Activated CD4-positive, alpha-beta T cell treated with anti-CD3 and anti-CD28 coated beads, Interleukin-2, amount 10 ng/mL, durations not matched to agents 24 days and 14 days (primary cell): ENCODE measurements at regions of chr7 and their contacts with region 1.

Region 1: GRCh38 chr7:142853739-142854371 is 1.0 kb upstream of the EPHB6 start:
- DNase-seq: peak; percentile 90
- H3K4me3 Mint-ChIP-seq: peak overlapping the region; percentile 94
- H3K27ac Mint-ChIP-seq: peak overlapping the region; percentile 82
- H3K4me1 Mint-ChIP-seq: peaks cover 14% of the 10 kb centered on the region
- H3K27me3 Mint-ChIP-seq: peaks cover 17% of the 10 kb centered on the region

Region 2: DNA sequence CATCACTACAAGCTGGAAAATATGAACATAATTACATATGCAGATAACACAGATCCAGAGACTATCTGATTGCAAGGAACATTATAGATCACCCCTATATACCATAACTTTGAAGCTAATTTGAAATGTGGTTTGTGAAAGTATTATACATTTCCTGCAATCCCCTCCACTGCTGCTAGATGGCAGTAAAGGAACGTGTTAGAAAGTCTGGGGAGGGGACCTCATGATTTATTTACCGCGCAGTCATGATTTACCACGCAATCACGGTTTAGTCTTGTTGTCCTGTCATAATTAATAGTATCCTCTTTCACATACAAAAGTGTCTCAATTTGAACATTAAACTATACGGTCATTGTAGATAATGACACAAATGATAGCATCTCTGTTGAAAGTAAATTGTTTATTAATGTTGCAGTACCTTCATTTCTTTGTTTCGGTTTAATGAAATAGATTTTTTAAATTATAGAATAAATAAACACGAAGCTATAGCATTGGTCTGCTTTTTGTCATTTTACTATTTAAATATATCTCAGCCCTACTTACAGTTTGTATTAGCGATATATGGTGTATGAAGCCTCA is 249.9 kb before region 1 on chr7:
- intact Hi-C with region 1: loop called (anchors 1 kb)
- DNase-seq: peak; percentile 86
- H3K4me3 Mint-ChIP-seq: peak overlapping the region; percentile 4
- H3K27ac Mint-ChIP-seq: no peak overlapping the region
- H3K4me1 Mint-ChIP-seq: peaks cover 3% of the 10 kb centered on the region
- H3K27me3 Mint-ChIP-seq: peaks cover 10% of the 10 kb centered on the region

Region 3: GRCh38 chr7:142866361-142867058 is 12.7 kb after region 1 on chr7:
- intact Hi-C with region 1: loop called (anchors 1 kb)
- DNase-seq: peak; percentile 73
- H3K4me3 Mint-ChIP-seq: no peak overlapping the region
- H3K27ac Mint-ChIP-seq: no peak overlapping the region
- H3K4me1 Mint-ChIP-seq: no peaks in the 10 kb centered on the region
- H3K27me3 Mint-ChIP-seq: no peaks in the 10 kb centered on the region